ENCODE measurements at regions of chr13 and their contacts with region 1.

Region 1: GRCh38 chr13:64471916-64472315 is 2758.2 kb downstream of the PCDH9 start:
- DNase-seq: no peak
- H3K4me3 ChIP-seq: no peak overlapping the region
- H3K4me3 Mint-ChIP-seq: no peak overlapping the region
- H3K27ac Mint-ChIP-seq: no peak overlapping the region
- H3K4me1 ChIP-seq: peaks cover 47% of the 10 kb centered on the region
- H3K4me1 Mint-ChIP-seq: peaks cover 10% of the 10 kb centered on the region
- H3K27me3 ChIP-seq: no peaks in the 10 kb centered on the region
- H3K27me3 Mint-ChIP-seq: no peaks in the 10 kb centered on the region
- CTCF ChIP-seq: peak; percentile 51 to 57

Region 2: DNA sequence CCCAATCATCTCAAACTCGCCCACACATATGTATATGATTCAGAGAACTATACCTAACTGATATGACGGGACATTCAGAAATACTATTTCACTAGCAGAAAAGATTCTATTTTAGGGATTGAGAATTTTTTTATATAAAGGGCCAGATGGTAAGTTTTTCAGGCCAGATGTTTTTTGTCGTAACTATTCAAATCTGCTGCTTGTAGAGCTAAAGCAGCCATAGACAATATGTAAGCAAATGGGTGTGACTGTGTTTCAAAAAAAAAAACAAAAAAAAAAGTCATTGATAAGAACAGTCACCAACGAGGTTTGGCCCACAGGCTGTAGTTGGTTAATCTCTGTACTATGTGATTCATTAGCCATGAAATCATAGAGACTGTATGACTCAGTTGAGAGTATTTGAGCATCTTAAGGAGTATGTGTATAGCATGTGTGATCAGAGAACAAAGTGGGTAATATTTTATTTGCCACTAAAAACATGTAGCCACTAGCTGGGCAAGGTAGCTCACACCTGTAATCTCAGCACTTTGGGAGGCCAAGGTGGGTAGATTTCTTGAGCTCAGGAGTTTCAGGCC is 33.5 kb after region 1 on chr13:
- CTCF ChIA-PET with region 1: no interaction called
- POLR2A ChIA-PET with region 1: no interaction called
- intact Hi-C with region 1: no loop called
- DNase-seq: no peak
- H3K4me3 ChIP-seq: no peak overlapping the region
- H3K4me3 Mint-ChIP-seq: no peak overlapping the region
- H3K27ac Mint-ChIP-seq: no peak overlapping the region
- H3K4me1 ChIP-seq: no peaks in the 10 kb centered on the region
- H3K4me1 Mint-ChIP-seq: no peaks in the 10 kb centered on the region
- H3K27me3 ChIP-seq: no peaks in the 10 kb centered on the region
- H3K27me3 Mint-ChIP-seq: no peaks in the 10 kb centered on the region
- CTCF ChIP-seq: no peak

Region 3: DNA sequence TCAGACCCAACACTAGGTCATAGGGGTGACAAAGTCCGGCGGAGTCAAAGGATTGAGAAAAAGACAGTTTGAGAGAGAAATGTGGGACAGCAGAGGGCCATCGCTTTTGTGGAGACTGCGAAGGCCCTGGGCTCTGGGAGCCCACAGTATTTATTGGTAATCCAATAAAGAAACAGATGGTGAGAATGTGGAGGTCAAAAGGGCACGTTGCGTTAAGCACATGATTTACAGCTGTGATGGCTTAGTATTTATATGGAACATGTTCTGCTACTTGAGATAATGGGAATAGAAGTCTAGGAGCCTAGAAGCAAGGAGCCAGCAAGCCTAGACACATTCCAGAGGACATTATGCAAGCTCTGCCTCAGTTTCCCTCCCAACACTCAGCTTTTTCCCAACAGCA is 237.2 kb after region 1 on chr13:
- CTCF ChIA-PET with region 1: no interaction called
- POLR2A ChIA-PET with region 1: no interaction called
- intact Hi-C with region 1: loop called (anchors 10 kb)
- DNase-seq: peak in 1 of 2 experiments; percentile 51
- H3K4me3 ChIP-seq: no peak overlapping the region
- H3K4me3 Mint-ChIP-seq: no peak overlapping the region
- H3K27ac Mint-ChIP-seq: peak overlapping the region; percentile 19
- H3K4me1 ChIP-seq: peaks cover 22% of the 10 kb centered on the region
- H3K4me1 Mint-ChIP-seq: peaks cover 27% of the 10 kb centered on the region
- H3K27me3 ChIP-seq: no peaks in the 10 kb centered on the region; the same call in 1 of the 2 replicates
- H3K27me3 Mint-ChIP-seq: no peaks in the 10 kb centered on the region
- CTCF ChIP-seq: no peak

Region 4: DNA sequence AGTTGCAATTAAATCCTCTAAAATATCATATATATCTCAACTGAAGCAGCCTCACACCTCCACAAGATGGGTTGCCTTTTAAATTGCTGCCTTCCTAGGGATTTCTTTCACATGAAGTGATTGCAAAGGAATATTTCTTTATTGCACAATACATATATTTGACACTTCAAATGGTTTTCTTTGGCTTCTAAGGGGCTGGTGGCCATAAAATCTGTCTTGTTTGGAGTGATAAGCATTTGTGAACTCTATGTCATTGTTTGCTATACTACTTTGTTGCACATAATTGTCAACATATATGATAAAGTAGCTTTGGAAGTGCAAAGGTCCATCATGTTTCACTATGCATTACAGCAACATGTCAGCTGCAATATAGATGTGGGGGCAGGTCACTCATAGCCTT is 377.3 kb after region 1 on chr13:
- CTCF ChIA-PET with region 1: no interaction called
- POLR2A ChIA-PET with region 1: no interaction called
- intact Hi-C with region 1: loop called (anchors 1 kb)
- DNase-seq: peak; percentile 69 to 70
- H3K4me3 ChIP-seq: no peak overlapping the region
- H3K4me3 Mint-ChIP-seq: no peak overlapping the region
- H3K27ac Mint-ChIP-seq: no peak overlapping the region
- H3K4me1 ChIP-seq: peaks cover 32% of the 10 kb centered on the region
- H3K4me1 Mint-ChIP-seq: peaks cover 34% of the 10 kb centered on the region
- H3K27me3 ChIP-seq: no peaks in the 10 kb centered on the region
- H3K27me3 Mint-ChIP-seq: no peaks in the 10 kb centered on the region
- CTCF ChIP-seq: no peak

Region 5: GRCh38 chr13:64993514-64994164 is 521.7 kb after region 1 on chr13:
- CTCF ChIA-PET with region 1: no interaction called
- POLR2A ChIA-PET with region 1: no interaction called
- intact Hi-C with region 1: loop called (anchors 10 kb)
- DNase-seq: no peak
- H3K4me3 ChIP-seq: no peak overlapping the region
- H3K4me3 Mint-ChIP-seq: no peak overlapping the region
- H3K27ac Mint-ChIP-seq: peak overlapping the region; percentile 5
- H3K4me1 ChIP-seq: no peaks in the 10 kb centered on the region
- H3K4me1 Mint-ChIP-seq: no peaks in the 10 kb centered on the region
- H3K27me3 ChIP-seq: no peaks in the 10 kb centered on the region
- H3K27me3 Mint-ChIP-seq: no peaks in the 10 kb centered on the region
- CTCF ChIP-seq: no peak

Region 6: GRCh38 chr13:65529541-65529940 is 1057.6 kb after region 1 on chr13:
- CTCF ChIA-PET with region 1: no interaction called
- POLR2A ChIA-PET with region 1: no interaction called
- intact Hi-C with region 1: loop called (anchors 10 kb)
- DNase-seq: no peak
- H3K4me3 ChIP-seq: no peak overlapping the region
- H3K4me3 Mint-ChIP-seq: no peak overlapping the region
- H3K27ac Mint-ChIP-seq: no peak overlapping the region
- H3K4me1 ChIP-seq: peaks cover 12% of the 10 kb centered on the region
- H3K4me1 Mint-ChIP-seq: peaks cover 7% of the 10 kb centered on the region
- H3K27me3 ChIP-seq: no peaks in the 10 kb centered on the region; the same call in 1 of the 2 replicates
- H3K27me3 Mint-ChIP-seq: no peaks in the 10 kb centered on the region
- CTCF ChIP-seq: no peak

Region 7: GRCh38 chr13:65638572-65639168 is 1166.8 kb after region 1 on chr13:
- CTCF ChIA-PET with region 1: interaction called, 5 read pairs
- POLR2A ChIA-PET with region 1: no interaction called
- intact Hi-C with region 1: loop called (anchors 1 kb)
- DNase-seq: peak in 1 of 2 experiments; percentile 42
- H3K4me3 ChIP-seq: no peak overlapping the region
- H3K4me3 Mint-ChIP-seq: no peak overlapping the region
- H3K27ac Mint-ChIP-seq: no peak overlapping the region
- H3K4me1 ChIP-seq: peaks cover 2% of the 10 kb centered on the region; the same call in 1 of the 2 replicates
- H3K4me1 Mint-ChIP-seq: no peaks in the 10 kb centered on the region
- H3K27me3 ChIP-seq: no peaks in the 10 kb centered on the region
- H3K27me3 Mint-ChIP-seq: no peaks in the 10 kb centered on the region
- CTCF ChIP-seq: peak; percentile 70 to 77

Measured in Caco-2 (cell line).